PC-3 (cell line): ENCODE measurements at regions of chr5 and their contacts with region 1.

Region 1: DNA sequence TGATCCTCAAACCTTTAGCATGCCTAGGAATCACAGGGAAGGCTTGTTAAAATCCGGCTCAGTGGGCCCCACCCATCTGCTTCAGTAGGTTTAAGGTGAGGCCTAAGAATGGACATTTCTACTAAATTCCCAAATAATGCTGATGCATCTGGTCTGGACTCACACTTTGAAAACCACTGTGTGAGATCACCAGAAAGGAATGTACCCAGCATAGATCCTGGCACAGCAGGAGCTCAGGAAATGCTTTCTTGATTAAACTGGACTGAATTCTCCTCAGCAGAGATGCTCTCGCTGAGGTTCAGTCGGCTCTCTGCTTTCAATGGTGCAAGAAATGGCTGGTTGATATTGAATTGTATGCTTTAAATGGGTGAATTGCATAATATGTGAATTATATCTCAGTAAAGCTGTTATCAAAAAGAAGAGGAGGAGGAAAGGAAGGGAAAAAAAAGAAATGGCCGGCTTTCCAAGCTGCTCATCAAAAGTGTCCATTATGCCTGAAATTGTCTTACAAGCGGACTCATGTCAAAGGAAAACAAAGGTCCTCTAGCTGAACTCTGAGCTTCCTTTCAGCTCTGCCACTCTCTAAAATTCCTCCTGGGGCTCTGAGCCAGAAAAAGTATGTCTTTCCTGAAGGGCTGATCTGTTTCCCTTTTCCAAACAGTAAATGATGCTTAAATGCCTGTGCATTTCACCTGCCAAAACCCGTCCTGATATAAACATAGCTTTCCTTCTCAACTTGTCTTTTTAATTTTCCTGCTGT is 77.6 kb upstream of the SAP30L start:
- DNase-seq: peak; percentile 95
- ATAC-seq: peak; percentile 88
- H3K4me3 ChIP-seq: peak overlapping the region; percentile 6; the same call in 1 of the 2 replicates
- H3K27ac ChIP-seq: peak overlapping the region; percentile 96
- H3K4me1 ChIP-seq: peaks cover 60% of the 10 kb centered on the region
- H3K27me3 ChIP-seq: no peaks in the 10 kb centered on the region
- CTCF ChIP-seq: no peak

Region 2: DNA sequence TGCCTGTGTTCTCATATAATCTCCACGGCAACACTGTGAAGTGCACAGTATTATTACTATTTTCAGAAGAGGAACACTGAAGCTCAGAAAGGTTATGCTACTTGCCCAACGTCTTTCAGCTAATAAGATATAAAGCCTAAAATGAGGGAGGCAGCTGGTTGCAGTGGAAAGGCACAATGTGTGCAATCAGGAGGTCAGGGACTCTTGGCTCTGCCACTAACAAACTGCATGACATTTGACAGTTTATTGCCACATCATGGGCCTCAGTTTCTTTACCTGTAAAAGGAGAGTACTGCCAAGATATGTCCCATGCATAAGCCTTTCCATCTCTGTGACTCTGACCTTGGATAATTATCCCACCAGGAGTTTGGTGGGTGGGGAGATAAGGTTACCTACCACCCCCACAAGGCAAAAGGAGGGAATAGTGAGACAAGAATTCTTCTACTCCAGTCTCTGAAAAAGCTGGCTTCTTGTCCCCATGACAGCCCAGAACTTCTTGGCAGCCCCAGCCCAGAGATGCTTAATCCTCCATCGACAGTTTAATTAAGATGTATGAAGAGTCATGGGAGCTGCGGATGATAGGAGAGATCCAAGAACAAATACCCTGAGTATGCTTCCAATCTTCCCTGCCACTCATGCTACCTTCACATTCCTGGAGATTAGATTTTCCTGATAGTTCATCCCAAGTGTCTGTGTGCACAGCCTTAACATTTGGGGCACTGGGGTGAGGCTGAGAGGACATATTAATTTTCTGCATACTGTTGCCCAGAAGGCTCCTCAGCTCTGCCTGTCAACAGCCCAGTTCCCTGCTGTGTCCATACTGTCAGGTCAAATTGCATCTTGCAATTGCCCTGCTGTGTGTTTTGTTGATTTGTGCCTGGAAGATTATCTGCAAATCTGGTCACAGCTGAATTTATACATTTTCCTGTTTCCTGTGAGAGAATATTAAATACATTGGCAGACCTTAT is 600.7 kb before region 1 on chr5:
- CTCF ChIA-PET with region 1: no interaction called
- POLR2A ChIA-PET with region 1: no interaction called
- intact Hi-C with region 1: no loop called
- DNase-seq: no peak
- ATAC-seq: no peak
- H3K4me3 ChIP-seq: no peak overlapping the region
- H3K27ac ChIP-seq: no peak overlapping the region
- H3K4me1 ChIP-seq: no peaks in the 10 kb centered on the region
- H3K27me3 ChIP-seq: peaks cover 12% of the 10 kb centered on the region; the same call in 1 of the 2 replicates
- CTCF ChIP-seq: no peak

Region 3: DNA sequence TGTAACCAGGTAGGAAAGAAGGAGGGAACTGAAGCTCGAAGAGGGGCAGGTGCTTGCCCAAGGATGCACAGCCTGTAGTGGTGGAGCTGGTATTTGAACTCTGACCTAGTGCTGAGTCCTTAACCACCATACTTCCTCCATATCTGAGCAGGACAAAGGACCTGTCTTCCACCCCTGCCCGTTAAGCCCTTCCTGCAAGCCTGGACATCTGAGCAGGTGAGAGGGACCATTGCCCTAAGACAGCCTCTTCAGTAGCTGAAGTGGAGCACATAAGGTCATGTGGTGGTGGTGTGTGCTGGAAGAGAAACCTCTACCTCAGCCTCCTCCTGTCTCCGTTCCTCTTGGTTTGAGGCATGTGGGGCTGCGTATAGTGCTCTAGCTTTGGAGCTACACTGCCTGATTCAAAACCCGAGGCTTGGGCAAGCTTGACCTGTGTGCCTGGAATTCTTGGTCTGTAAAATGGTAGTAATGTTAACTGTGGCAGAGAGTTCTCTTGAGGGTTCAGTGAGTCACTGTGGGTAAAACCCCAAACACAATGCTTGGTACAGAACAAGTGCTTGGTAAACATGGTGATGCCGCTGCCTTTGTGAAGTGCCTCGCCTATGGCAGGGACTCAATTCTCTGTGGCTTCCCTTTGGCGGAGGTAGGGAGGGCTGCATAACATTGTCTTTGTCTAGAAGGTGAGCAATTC is 170.3 kb before region 1 on chr5:
- CTCF ChIA-PET with region 1: no interaction called
- POLR2A ChIA-PET with region 1: no interaction called
- intact Hi-C with region 1: loop called (anchors 1 kb)
- DNase-seq: peak; percentile 94
- ATAC-seq: peak; percentile 70
- H3K4me3 ChIP-seq: peak overlapping the region; percentile 47; the same call in 1 of the 2 replicates
- H3K27ac ChIP-seq: peak overlapping the region; percentile 99
- H3K4me1 ChIP-seq: peaks cover 66% of the 10 kb centered on the region
- H3K27me3 ChIP-seq: no peaks in the 10 kb centered on the region
- CTCF ChIP-seq: no peak

Region 4: GRCh38 chr5:154296525-154297208 is 71.6 kb before region 1 on chr5:
- CTCF ChIA-PET with region 1: no interaction called
- POLR2A ChIA-PET with region 1: no interaction called
- intact Hi-C with region 1: loop called (anchors 2 kb)
- DNase-seq: peak; percentile 86
- ATAC-seq: peak; percentile 99
- H3K4me3 ChIP-seq: peak overlapping the region; percentile 26; the same call in 1 of the 2 replicates
- H3K27ac ChIP-seq: peak overlapping the region; percentile 67
- H3K4me1 ChIP-seq: peaks cover 31% of the 10 kb centered on the region
- H3K27me3 ChIP-seq: no peaks in the 10 kb centered on the region
- CTCF ChIP-seq: no peak

Region 5: GRCh38 chr5:154593071-154593470 is 224.8 kb after region 1 on chr5:
- CTCF ChIA-PET with region 1: no interaction called
- POLR2A ChIA-PET with region 1: no interaction called
- intact Hi-C with region 1: no loop called
- DNase-seq: peak; percentile 23
- ATAC-seq: peak; percentile 54
- H3K4me3 ChIP-seq: no peak overlapping the region
- H3K27ac ChIP-seq: no peak overlapping the region
- H3K4me1 ChIP-seq: no peaks in the 10 kb centered on the region
- H3K27me3 ChIP-seq: peaks cover 5% of the 10 kb centered on the region
- CTCF ChIP-seq: no peak